Tibial artery (tissue), 4 donors: ENCODE measurements at regions of chr17 and their contacts with region 1.

Region 1: GRCh38 chr17:72362376-72363088 is 241.7 kb downstream of the SOX9 start:
- DNase-seq: no peak
- H3K4me3 ChIP-seq: no peak overlapping the region
- H3K27ac ChIP-seq: no peak overlapping the region
- H3K4me1 ChIP-seq: no peaks in the 10 kb centered on the region
- H3K27me3 ChIP-seq: peaks cover 0 to 17% of the 10 kb centered on the region in 2 donors
- CTCF ChIP-seq: no peak

Region 2: GRCh38 chr17:72465191-72466024 is 102.9 kb after region 1 on chr17:
- intact Hi-C with region 1: no loop called
- DNase-seq: peak in 1 of 2 donors; percentile 64
- H3K4me3 ChIP-seq: no peak overlapping the region
- H3K27ac ChIP-seq: no peak overlapping the region
- H3K4me1 ChIP-seq: peaks cover 0 to 6% (median 2%) of the 10 kb centered on the region in 4 donors
- H3K27me3 ChIP-seq: no peaks in the 10 kb centered on the region
- CTCF ChIP-seq: no peak

Region 3: GRCh38 chr17:72788950-72789585 is 426.5 kb after region 1 on chr17:
- intact Hi-C with region 1: no loop called
- DNase-seq: no peak
- H3K4me3 ChIP-seq: no peak overlapping the region
- H3K27ac ChIP-seq: no peak overlapping the region
- H3K4me1 ChIP-seq: no peaks in the 10 kb centered on the region
- H3K27me3 ChIP-seq: no peaks in the 10 kb centered on the region
- CTCF ChIP-seq: no peak

Region 4: DNA sequence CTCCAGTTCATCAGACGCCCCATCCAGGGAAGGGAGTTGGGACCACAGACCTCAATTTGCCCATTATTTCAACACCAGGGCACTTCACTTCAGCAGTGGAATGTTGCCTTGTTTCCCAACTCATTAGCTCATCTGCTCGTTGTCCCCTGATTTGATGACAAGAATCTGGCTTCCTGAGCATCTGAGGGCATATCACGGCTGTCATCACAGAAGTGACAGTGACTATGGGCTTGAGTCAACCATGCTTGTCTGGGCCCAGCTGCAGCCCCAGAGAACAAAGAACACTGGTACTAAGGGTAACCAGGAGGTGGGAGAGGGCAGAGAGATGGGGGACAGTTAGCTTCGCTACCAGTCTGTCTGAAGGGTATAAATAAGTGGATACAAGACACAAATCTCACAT is 1547.7 kb after region 1 on chr17:
- intact Hi-C with region 1: loop called (anchors 10 kb)
- DNase-seq: no peak
- H3K4me3 ChIP-seq: no peak overlapping the region
- H3K27ac ChIP-seq: no peak overlapping the region
- H3K4me1 ChIP-seq: no peaks in the 10 kb centered on the region
- H3K27me3 ChIP-seq: peaks cover 0 to 19% of the 10 kb centered on the region in 2 donors
- CTCF ChIP-seq: no peak